SK-N-SH (cell line): ENCODE measurements at regions of chr22 and their contacts with region 1.

Region 1: DNA sequence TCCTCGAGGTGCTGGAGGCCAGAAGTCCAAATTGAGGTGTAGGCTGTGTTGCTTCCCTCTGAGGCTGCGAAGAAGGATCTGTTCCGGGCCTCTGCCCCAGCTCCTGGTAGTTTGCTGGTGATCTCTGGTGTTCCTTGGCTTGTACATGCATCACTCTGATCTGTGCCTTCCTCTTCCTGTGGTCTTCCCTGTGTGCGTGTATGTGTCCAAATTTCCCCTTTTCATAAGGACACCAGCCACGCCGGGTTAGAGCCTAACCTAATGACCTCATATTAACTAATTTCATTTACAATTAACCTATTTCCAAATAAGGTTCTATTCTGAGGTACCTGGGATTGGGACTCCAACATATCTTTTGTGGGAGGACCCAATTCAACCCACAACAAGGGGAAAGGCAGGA is 21.5 kb downstream of the RIBC2 start:
- DNase-seq: no peak
- H3K4me3 ChIP-seq: no peak overlapping the region
- H3K27ac ChIP-seq: peak overlapping the region in 1 of 2 experiments; percentile 5; a peak in 1 of 4 replicates
- H3K4me1 ChIP-seq: peaks cover 0 to 7% of the 10 kb centered on the region in 2 experiments; a peak in 1 of 4 replicates
- H3K27me3 ChIP-seq: no peaks in the 10 kb centered on the region
- CTCF ChIP-seq: no peak
- EP300 ChIP-seq: no peak
- RAD21 ChIP-seq: no peak

Region 2: DNA sequence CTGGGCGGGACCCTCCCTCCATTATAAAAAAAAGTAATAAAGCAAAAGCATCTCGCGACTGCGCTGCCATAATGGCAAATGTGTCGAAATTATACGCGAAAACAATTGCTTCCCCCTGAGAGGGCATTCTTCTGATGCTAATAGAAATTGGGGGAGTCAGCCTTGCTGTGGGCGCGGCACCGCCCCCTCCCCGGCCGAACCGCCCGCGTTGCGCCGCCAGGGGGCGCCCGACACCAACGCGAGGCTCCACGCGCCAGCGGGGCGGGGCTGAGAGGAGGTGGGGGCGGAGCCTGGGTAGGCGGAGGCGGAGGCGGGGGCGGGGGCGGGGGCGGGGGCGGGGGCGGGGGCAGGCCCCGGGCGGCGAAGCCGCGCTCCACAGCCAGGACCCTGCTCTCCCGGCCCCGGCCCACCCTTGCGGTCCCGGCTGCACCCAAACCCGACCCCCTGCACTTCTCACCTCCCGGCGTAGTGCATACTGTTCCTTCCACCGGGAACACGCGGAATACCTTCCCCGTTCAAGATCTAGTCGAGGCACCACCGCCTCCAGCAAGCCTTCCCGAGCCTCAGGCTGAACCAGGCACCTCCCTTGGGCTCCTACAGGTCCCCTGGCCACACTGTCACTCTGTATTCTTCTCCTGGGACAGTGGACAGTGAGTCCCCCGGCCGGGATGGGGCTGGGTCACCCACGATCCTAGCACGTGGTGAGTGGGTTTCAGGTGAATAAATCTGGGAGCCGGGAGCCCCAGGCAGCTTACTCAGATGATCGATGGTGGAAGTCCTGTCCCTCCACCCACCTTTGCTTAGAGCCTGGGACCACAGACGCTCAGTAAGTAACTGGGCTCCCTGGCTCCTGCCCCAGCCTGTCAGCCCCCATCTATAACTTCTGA is 165.8 kb before region 1 on chr22:
- CTCF ChIA-PET with region 1: interaction called, 14 read pairs
- POLR2A ChIA-PET with region 1: no interaction called
- DNase-seq: peak; percentile 93
- H3K4me3 ChIP-seq: peak overlapping the region; percentile 62 to 79
- H3K27ac ChIP-seq: peak overlapping the region; percentile 42 to 90; a peak in 3 of 4 replicates
- H3K4me1 ChIP-seq: peaks cover 0 to 5% of the 10 kb centered on the region in 2 experiments; a peak in 1 of 4 replicates
- H3K27me3 ChIP-seq: no peaks in the 10 kb centered on the region
- CTCF ChIP-seq: peak; percentile 81
- EP300 ChIP-seq: no peak
- RAD21 ChIP-seq: peak; percentile 86